OCI-LY7 (cell line): ENCODE measurements at regions of chr20 and their contacts with region 1.

Region 1: GRCh38 chr20:32779500-32780211 is 17.5 kb downstream of the DNMT3B start:
- DNase-seq: no peak
- H3K4me3 ChIP-seq: no peak overlapping the region
- H3K27ac ChIP-seq: no peak overlapping the region
- H3K4me1 ChIP-seq: no peaks in the 10 kb centered on the region
- CTCF ChIP-seq: no peak

Region 2: GRCh38 chr20:32521780-32522525 is 257.7 kb before region 1 on chr20:
- CTCF ChIA-PET with region 1: no interaction called
- POLR2A ChIA-PET with region 1: no interaction called
- intact Hi-C with region 1: loop called (anchors 2 kb)
- DNase-seq: peak; percentile 73
- H3K4me3 ChIP-seq: no peak overlapping the region
- H3K27ac ChIP-seq: no peak overlapping the region
- H3K4me1 ChIP-seq: peaks cover 24% of the 10 kb centered on the region
- CTCF ChIP-seq: peak; percentile 93

Region 3: GRCh38 chr20:32674362-32674789 is 105.3 kb before region 1 on chr20:
- CTCF ChIA-PET with region 1: interaction called, 57 read pairs
- POLR2A ChIA-PET with region 1: interaction called, 16 read pairs
- intact Hi-C with region 1: loop called (anchors 1 kb)
- DNase-seq: peak; percentile 83
- H3K4me3 ChIP-seq: no peak overlapping the region
- H3K27ac ChIP-seq: peak overlapping the region; percentile 96
- H3K4me1 ChIP-seq: peaks cover 72% of the 10 kb centered on the region
- CTCF ChIP-seq: peak; percentile 98